ENCODE measurements at regions of chr9 and their contacts with region 1.

Region 1: DNA sequence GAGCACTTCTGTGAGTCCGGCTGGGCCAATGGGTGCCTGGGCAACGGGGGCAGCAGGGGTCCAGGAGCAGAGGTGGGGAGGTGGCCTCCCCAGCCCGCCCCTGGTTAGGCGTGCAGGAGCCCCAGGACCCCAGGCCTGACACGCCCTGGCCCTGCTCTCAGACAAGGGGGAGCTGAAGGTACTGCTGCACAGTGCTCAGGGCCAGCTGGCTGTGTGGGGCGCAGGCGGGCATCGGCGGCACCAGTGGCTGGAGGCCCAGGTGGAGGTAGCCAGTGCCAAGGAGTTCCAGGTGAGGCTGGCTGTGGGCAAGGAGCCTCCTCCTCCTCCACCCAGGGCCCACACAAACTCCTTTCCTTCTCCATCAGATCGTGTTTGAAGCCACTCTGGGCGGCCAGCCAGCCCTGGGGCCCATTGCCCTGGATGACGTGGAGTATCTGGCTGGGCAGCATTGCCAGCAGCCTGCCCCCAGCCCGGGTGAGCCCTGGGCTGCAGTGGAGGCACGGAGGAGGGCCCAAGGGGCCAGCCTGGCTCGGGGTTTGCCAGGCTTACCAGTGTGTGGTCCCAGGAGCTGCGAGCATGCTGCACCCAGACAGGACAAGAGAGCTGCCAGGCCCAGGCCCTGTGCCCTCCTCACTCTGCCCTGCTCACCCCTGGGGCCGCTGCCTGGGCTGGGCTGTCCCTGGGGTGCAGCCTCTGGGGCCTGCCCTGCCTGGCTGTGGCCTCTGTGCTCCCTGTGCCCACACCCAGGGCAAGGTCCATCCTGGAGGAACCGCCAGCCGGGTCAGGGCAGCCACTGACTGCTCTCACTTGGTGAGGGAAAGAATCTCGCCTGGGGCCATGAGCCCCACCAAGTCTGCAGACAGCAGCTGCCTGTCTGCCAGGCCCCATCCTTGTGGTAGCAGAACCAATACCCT is 7.0 kb downstream of the MAMDC4 start:
- DNase-seq: no peak
- H3K4me3 ChIP-seq: no peak overlapping the region
- CTCF ChIP-seq: no peak
- POLR2A ChIP-seq: no peak

Region 2: DNA sequence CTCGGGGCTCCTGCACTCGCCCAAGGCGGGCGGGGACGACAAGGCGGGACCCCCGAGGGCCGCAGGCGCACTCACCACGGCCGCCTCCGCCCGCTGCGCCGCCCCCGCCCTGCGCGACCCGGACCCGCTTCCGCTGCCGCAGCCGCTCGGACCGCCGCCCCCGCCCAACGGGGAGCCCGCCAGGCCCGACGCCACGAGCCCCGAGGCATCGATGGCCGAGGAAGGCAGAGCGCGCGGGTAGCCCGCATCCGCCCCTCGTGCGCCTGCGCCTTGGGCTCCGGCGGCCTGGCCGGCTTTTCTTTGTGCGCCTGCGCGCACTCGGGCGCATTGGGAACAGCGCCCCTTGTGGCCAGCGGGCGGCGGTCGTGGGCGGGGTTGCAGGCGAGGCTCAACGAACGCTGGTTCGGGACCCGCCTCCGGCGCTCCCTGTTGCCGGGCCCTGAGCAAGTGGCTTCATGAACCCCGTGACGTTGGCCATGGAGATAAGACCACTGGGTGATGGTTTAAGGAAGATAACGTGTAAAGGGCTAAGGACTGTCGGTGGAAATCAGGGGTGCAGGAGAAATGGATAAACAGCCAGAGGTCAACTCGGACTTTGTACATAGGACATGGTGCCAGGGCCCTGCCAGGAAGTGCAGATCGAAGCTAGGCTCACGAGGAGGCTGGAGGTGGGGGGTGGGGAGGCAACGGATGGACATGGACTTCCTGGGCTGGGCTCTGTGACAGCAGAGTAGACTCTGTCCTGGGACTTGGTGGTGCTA is 85.6 kb after region 1 on chr9 and contains the starts of genes C8G and FBXW5:
- intact Hi-C with region 1: loop called (anchors 10 kb)
- DNase-seq: peak; percentile 87 to 98
- H3K4me3 ChIP-seq: peak within 1 kb of the TSS; percentile 69
- CTCF ChIP-seq: peak in 1 of 3 donors; percentile 88
- POLR2A ChIP-seq: no peak
- total RNA-seq, gene C8G: not detected
- total RNA-seq, gene FBXW5: 145 to 182 (median 154) TPM